GM13977 (cell line): ENCODE measurements at regions of chr19 and their contacts with region 1.

Region 1: DNA sequence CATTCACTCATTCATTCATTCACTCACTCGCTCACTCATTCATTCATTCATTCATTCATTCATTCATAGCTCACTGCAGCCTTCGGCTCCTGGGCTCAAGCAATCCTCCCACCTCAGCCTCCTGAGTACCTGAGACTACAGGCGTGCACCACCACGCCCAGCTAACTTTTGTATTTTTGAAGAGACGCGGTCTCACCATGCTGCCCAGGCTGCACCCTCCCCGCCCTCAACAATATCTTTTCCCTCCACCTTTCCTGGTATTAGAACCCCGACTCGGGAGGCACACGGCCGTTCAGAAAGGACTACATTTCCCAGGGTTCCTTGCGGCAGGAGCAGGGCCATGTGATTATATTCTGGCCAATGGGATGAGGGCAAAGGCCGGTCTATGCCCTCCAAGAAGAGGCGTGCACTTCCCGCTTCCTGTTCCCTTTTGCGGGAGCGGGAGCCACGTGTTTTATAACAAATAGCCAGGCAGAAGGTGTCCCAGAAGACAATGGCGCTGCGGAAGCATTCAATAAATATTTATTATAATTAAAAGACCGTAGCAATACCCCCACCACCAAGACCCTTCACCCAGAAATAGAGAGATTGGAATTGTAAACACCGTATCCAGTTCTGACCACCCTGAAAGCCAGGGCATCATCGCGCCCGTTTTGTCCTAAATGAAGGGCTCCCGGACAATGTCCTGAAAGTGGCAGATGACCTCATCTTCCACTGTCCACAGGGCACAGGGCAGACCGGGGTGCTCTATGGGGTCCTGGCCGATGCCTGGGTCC is 15.9 kb downstream of the TICAM1 start:
- DNase-seq: peak; percentile 94
- CTCF ChIP-seq: no peak

Region 2: GRCh38 chr19:4861077-4861543 is 45.5 kb after region 1 on chr19:
- in situ Hi-C with region 1: no loop called
- DNase-seq: no peak
- CTCF ChIP-seq: no peak

Region 3: GRCh38 chr19:4909897-4910593 is 94.4 kb after region 1 on chr19:
- in situ Hi-C with region 1: loop called (anchors 10 kb)
- DNase-seq: peak; percentile 99
- CTCF ChIP-seq: no peak

Region 4: GRCh38 chr19:5031231-5032100 is 215.9 kb after region 1 on chr19:
- in situ Hi-C with region 1: loop called (anchors 10 kb)
- DNase-seq: peak; percentile 95
- CTCF ChIP-seq: peak; percentile 95

Region 5: DNA sequence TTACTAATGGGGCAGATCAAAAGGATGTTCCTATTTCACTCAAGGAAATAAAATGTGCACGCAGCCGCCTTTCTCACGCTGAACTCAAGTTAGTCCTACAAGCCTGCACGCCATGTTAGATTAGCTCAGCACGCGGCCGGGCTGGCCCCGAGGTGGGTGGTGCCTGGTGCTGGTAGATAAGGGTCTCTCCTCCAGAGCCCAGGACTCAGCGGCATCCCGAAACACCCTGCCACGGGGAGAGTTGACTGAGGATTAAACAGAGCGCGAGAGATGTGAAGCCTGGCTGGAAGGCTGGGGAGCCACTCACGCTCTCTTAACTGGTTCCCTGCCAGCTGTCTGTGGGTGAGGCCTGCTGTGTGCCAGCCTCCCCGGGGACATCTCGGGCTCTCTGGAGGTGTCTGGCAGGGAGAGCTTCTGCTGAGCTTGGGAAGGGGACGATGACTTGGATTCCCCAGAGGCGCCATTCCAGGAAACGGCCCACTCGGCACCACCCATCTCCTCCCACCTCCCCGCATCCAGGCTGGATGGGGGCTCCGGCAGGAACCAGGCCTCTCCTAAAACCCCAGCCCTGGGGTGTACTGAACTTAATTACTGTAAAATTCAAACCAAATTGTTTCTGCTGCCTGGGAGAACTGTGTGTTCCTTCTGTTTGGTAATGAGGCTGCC is 275.5 kb after region 1 on chr19:
- in situ Hi-C with region 1: no loop called
- DNase-seq: no peak
- CTCF ChIP-seq: no peak